ENCODE measurements at regions of chr11 and their contacts with region 1.

Region 1: GRCh38 chr11:72814286-72815109 is at the start of gene ATG16L2:
- DNase-seq: peak; percentile 89
- H3K4me3 Mint-ChIP-seq: peak within 1 kb of the TSS; percentile 100
- H3K27ac Mint-ChIP-seq: peak within 1 kb of the TSS; percentile 97
- H3K4me1 Mint-ChIP-seq: peaks cover 34% of the 10 kb centered on the region
- H3K27me3 Mint-ChIP-seq: no peaks in the 10 kb centered on the region
- total RNA-seq, gene ATG16L2: 105 to 114 TPM

Region 2: DNA sequence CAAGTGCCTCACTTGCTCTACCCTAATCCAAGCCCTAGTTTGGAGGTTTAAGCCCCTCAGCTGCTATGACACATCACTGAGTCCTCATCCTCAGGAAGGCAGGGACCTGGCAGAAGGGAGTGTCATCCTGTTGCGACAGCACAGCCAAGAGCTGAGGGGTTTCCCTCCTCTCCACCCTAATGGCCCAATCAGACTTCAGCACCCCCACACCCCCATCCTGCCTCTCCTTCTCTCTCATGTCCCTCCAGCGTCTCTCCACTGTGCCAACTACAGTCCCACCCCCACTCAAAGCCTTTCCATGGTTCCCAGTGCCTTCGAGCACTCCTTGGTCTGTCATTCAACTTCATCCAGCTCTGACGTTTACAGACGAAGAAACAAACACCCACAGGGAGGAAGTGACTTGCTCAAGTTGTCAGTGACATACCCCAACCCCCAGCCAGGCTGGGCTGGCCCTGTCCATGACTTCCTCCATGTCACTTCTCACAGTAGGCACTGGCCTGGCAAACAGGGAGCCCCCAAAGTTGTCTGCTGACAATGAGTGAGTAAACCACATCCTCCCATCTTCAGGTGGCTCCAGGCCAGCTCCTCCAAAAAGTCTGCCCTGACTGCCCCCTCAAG is 77.9 kb before region 1 on chr11:
- CTCF ChIA-PET with region 1: interaction called, 8 read pairs
- intact Hi-C with region 1: loop called (anchors 1 kb)
- DNase-seq: peak; percentile 89
- H3K4me3 Mint-ChIP-seq: peak overlapping the region; percentile 53
- H3K27ac Mint-ChIP-seq: peak overlapping the region; percentile 90
- H3K4me1 Mint-ChIP-seq: peaks cover 53% of the 10 kb centered on the region
- H3K27me3 Mint-ChIP-seq: no peaks in the 10 kb centered on the region

Region 3: GRCh38 chr11:72848846-72849466 is 34.5 kb after region 1 on chr11:
- CTCF ChIA-PET with region 1: no interaction called
- intact Hi-C with region 1: loop called (anchors 2 kb)
- DNase-seq: peak; percentile 66
- H3K4me3 Mint-ChIP-seq: no peak overlapping the region
- H3K27ac Mint-ChIP-seq: peak overlapping the region; percentile 15
- H3K4me1 Mint-ChIP-seq: peaks cover 6% of the 10 kb centered on the region
- H3K27me3 Mint-ChIP-seq: no peaks in the 10 kb centered on the region

Region 4: DNA sequence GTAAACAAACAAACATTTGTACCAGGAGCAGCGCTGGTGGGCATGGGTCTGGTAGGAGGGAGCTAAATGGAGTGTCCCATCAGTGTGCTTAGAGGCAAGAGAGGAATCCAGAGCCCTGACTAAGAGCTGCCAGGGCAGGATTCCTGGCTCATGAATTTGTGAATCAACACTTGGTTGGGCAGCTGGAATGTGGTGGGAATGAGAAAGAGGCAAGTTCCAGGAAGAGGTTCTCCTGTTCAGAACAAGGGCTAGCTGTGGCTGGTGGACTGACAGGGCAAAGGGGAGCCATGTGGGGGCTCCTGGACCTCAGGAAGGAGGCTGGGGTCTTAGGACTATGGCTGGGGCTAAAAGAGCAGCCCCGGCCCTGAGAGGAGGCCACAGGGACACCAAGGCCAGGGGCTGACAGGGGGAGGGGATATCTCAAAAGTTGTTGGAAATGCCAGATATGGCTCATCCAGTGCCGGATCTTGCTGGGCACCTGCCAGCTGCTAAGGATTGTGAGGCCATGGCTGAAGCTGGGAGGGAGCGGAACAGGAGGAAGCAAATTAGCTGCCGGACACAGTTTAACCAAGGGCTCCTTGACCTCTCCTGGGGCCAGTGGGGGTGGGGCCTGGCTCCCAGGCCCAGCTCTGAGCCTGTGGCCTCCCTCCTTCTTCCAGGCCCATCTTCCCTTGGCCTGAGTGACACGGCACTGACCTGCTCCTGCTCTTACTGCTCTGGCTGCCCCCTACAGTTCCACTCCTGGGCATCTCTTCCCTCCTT is 443.0 kb after region 1 on chr11:
- CTCF ChIA-PET with region 1: no interaction called
- intact Hi-C with region 1: no loop called
- DNase-seq: no peak
- H3K4me3 Mint-ChIP-seq: no peak overlapping the region
- H3K27ac Mint-ChIP-seq: no peak overlapping the region
- H3K4me1 Mint-ChIP-seq: no peaks in the 10 kb centered on the region
- H3K27me3 Mint-ChIP-seq: peaks cover 3% of the 10 kb centered on the region